Activated naive CD4-positive, alpha-beta T cell treated with anti-CD3 and anti-CD28 coated beads for 36 hours (primary cell): ENCODE measurements at regions of chr12 and their contacts with region 1.

Region 1: DNA sequence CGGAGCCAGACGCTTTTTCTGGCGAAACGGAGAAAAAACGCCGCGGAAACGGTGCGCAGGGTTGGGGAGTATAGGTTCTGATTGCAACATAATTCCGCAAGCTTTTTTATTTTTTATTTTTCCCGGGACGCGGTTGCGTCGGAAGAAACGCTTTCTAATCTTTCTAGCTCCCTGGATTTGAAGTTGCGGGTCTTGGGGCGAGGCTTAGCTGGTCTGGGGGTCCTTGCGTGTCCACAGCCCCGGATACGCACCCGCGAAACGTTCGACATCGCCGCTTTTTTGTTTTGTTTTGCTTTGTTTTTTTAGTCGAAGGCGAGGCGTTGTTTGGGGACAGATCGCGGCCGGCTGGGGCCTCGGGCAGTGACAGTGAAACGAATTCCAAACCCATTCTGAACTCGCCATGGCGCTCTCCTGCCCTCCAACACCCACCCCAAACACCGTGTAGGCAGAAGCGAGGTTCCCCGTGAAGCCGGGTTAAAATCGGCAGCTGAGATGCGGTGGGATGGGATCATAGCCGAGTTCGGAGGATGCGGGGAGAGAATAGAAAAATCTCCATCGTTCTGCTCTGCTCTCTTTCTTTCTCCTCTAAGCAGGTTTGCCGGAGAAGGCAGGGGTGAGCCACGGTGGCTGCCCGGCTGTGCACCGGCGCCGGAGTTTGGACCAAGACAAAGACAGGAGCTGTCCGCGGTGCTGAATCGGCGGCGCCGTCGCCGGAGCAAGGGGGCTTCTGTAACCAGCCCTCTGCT is 8.1 kb upstream of the LHX5 start:
- DNase-seq: peak; percentile 60
- H3K4me3 Mint-ChIP-seq: no peak overlapping the region
- H3K27ac Mint-ChIP-seq: peak overlapping the region; percentile 36
- H3K4me1 Mint-ChIP-seq: no peaks in the 10 kb centered on the region
- H3K27me3 Mint-ChIP-seq: peaks cover 74% of the 10 kb centered on the region

Region 2: DNA sequence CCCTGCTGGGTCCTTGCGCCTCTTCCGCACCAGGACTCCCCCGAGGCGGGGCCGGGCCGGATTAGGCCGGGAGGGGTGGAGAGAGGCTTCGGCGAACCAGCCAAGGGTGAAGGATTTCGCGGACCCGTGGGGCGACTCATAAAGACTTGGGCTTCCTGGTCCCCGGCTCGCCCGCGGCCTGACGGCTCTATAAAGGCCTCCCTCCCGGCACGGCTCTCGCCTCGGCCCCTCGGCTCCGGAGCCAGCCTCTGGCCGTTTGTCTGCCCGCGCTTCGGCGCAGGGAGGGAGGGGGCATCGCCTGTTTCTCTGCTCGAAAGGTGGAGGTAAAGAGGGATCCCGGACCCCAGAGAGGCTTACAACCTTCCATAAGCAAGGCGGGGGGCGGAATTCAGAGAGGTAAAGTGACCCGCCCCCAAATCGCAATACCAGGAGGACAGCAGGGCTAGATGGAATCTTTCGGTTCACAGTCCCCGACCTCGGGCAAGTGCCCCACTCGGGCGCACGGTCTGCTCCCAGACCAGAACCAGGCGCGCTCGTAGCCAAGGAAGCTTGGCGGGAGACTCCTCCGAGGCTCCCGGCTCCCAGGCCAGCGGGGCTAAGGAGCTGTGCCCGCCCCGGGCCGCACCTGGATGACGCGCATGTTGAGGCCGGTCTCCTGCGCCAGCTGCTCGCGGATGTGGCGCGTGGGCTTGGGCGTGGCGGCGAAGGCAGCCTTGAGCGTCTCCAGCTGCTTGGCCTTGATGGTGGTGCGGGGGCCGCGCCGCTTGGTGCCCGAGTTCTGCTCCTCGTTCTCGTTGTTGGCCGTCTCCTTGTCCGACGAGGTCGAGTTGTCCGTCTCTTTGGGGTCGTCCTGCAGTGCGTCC is 12.0 kb before region 1 on chr12:
- CTCF ChIA-PET with region 1: interaction called, 10 read pairs
- intact Hi-C with region 1: loop called (anchors 2 kb)
- DNase-seq: no peak
- H3K4me3 Mint-ChIP-seq: no peak overlapping the region
- H3K27ac Mint-ChIP-seq: no peak overlapping the region
- H3K4me1 Mint-ChIP-seq: peaks cover 26% of the 10 kb centered on the region
- H3K27me3 Mint-ChIP-seq: peaks cover 75% of the 10 kb centered on the region

Region 3: GRCh38 chr12:114447274-114447716 is 967.5 kb after region 1 on chr12:
- CTCF ChIA-PET with region 1: no interaction called
- intact Hi-C with region 1: loop called (anchors 10 kb)
- DNase-seq: no peak
- H3K4me3 Mint-ChIP-seq: no peak overlapping the region
- H3K27ac Mint-ChIP-seq: no peak overlapping the region
- H3K4me1 Mint-ChIP-seq: no peaks in the 10 kb centered on the region
- H3K27me3 Mint-ChIP-seq: peaks cover 70% of the 10 kb centered on the region

Region 4: DNA sequence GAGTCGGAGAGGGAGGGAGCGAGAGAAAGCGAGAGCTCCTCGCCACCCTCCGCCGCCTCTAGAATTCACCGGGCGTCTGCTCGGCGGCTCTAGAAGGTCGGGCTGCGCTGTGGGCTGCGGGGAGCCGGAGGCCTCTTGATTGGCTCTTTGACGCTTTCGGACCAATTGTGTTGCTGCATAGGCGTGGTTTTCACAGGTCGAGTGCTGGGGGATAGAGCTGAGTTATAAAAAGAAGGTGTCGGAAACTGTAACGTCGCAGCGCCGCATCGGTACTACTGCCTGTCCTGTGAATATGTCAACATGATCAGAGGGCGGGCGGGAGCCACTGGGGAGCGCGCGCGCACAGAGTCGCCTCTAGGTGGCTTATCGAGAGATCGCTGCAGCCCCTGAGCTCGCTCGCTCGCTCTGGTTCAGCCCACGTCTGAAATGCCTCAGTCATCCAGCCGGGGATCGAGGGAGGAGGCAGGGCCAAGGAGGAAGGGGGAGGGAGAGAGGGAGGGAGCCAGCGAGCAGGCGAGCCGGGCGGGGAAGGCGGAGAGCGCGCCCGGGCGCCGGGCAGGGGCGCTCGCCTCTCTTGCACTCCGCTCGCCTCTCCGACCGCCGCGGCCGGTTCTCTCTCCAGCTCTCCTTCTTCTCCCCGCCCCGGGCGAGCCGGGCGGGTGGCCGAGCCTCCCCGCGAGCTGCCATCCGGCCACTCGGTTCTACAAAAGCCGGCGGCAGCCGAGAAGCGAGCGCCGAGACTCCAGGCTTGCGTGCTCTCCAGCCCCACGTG is 1204.5 kb after region 1 on chr12 and contains the start of gene TBX3:
- CTCF ChIA-PET with region 1: no interaction called
- intact Hi-C with region 1: loop called (anchors 10 kb)
- DNase-seq: peak; percentile 79
- H3K4me3 Mint-ChIP-seq: peak within 1 kb of the TSS; percentile 73
- H3K27ac Mint-ChIP-seq: no peak within 1 kb of the TSS
- H3K4me1 Mint-ChIP-seq: peaks cover 45% of the 10 kb centered on the region
- H3K27me3 Mint-ChIP-seq: peaks cover 91% of the 10 kb centered on the region
- total RNA-seq, gene TBX3: not detected